GM12878 (cell line): ENCODE measurements at regions of chr7 and their contacts with region 1.

Region 1: GRCh38 chr7:17512181-17512675 is 213.8 kb downstream of the AHR start:
- DNase-seq: no peak
- ATAC-seq: no peak
- H3K4me3 ChIP-seq: no peak overlapping the region
- H3K27ac ChIP-seq: no peak overlapping the region
- H3K4me1 ChIP-seq: no peaks in the 10 kb centered on the region
- H3K27me3 ChIP-seq: no peaks in the 10 kb centered on the region
- CTCF ChIP-seq: no peak
- EP300 ChIP-seq: no peak
- POLR2A ChIP-seq: no peak
- RAD21 ChIP-seq: no peak

Region 2: DNA sequence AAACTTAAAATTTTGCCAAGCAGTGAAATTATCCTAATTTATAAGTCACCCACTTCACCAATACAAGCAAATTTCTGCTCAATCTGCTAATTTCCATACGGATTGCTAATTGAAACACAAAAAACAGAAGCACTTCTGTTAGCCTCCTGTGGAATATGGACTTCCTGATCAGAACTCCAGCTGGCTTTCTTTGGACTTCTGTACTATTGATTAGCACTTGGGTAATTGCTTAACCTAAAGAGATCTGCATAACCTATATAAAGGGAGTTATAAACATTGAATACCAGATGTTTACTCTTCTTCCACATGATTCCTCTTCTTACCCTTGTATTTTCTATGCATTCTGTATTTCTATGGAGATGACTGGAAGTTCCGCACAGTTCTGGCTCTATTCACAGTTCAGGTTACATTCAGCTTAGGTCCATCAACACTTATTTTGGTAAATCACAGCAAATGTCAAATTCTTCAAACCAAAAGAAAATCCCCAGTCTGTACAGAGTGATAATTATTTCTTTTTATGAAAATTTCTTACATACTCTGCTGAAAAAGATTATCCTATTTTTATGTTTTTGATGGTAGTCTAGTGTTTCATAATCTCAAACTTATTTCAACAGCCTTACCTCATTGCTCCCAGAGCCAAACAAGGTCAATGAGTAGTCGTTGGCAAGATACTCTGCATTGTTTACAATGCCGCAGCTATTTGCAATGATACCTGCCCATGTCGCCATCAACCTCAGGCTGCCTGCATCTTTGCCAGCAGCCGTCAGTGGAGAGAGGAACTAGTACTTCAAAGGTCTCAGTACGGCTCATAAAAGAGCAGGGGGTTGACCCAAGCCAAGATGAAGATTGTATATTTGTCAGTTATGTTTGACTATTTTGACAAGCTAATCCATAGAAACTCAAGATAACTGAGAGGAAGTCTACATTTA is 11.8 kb after region 1 on chr7:
- CTCF ChIA-PET with region 1: no interaction called
- POLR2A ChIA-PET with region 1: interaction called, 4 read pairs
- RAD21 ChIA-PET with region 1: interaction called, 3 read pairs
- SMC1A ChIA-PET with region 1: interaction called, 24 read pairs
- in situ Hi-C with region 1: no loop called
- intact Hi-C with region 1: no loop called
- DNase-seq: no peak
- ATAC-seq: no peak
- H3K4me3 ChIP-seq: no peak overlapping the region
- H3K27ac ChIP-seq: no peak overlapping the region
- H3K4me1 ChIP-seq: no peaks in the 10 kb centered on the region
- H3K27me3 ChIP-seq: no peaks in the 10 kb centered on the region
- CTCF ChIP-seq: no peak
- EP300 ChIP-seq: no peak
- POLR2A ChIP-seq: no peak
- RAD21 ChIP-seq: no peak

Region 3: GRCh38 chr7:17807242-17807641 is 295.0 kb after region 1 on chr7:
- CTCF ChIA-PET with region 1: no interaction called
- POLR2A ChIA-PET with region 1: no interaction called
- RAD21 ChIA-PET with region 1: no interaction called
- SMC1A ChIA-PET with region 1: no interaction called
- in situ Hi-C with region 1: no loop called
- intact Hi-C with region 1: no loop called
- DNase-seq: no peak
- ATAC-seq: no peak
- H3K4me3 ChIP-seq: no peak overlapping the region
- H3K27ac ChIP-seq: no peak overlapping the region
- H3K4me1 ChIP-seq: no peaks in the 10 kb centered on the region
- H3K27me3 ChIP-seq: no peaks in the 10 kb centered on the region
- CTCF ChIP-seq: no peak
- EP300 ChIP-seq: no peak
- POLR2A ChIP-seq: no peak
- RAD21 ChIP-seq: no peak